ENCODE measurements at regions of chr17 and their contacts with region 1.

Region 1: GRCh38 chr17:16537130-16537458 is 31.9 kb downstream of the ZNF287 start:
- DNase-seq: no peak
- ATAC-seq: no peak
- H3K4me3 ChIP-seq: no peak overlapping the region
- H3K27ac ChIP-seq: no peak overlapping the region
- H3K4me1 ChIP-seq: no peaks in the 10 kb centered on the region
- H3K27me3 ChIP-seq: no peaks in the 10 kb centered on the region
- CTCF ChIP-seq: no peak
- POLR2A ChIP-seq: no peak
- RAD21 ChIP-seq: no peak

Region 2: DNA sequence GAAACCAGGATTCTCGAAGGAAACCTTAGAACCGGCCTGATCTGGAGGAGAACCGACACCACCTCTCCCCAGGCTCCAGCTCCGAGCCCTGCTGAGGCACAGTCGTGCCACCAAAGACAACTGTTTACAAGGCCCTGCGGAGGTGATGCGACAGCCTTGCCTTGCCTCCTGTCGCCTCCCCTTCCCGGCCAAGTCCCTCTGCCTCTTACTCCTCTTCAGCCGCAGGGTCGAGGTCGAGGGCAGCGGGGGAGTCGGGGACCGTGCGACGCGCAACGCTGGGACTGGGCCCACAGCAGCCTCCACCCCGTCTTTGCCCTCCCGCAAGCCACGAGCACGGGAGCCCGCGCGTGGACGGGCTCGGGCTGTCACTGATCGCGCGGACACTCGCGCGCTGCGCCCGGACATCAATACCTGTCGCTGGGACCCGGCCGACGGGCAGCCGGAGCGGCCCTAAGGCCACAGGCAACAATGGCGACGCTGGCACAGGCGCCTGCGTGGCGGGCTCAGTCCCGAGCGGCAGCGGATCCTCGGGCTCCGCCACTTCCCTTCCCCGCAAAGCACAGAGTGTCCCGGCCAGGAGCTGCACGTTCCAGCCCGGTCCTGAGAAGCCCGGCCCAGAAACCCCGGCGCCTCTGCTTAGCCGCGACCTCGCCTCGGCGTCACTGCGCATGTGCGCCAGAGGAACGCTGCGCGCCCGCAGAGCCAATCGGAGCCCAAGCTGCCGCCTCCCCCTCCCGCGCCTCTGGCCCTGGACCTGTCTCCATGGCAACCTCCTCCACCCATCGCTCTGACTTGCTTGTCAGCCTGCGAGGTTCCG is 31.7 kb after region 1 on chr17 and contains the start of gene ZNF287:
- CTCF ChIA-PET with region 1: no interaction called
- POLR2A ChIA-PET with region 1: no interaction called
- dilution Hi-C with region 1: no loop called
- in situ Hi-C with region 1: no loop called
- intact Hi-C with region 1: loop called (anchors 1 kb)
- DNase-seq: peak; percentile 86
- ATAC-seq: peak; percentile 100
- H3K4me3 ChIP-seq: peak within 1 kb of the TSS; percentile 69
- H3K27ac ChIP-seq: peak within 1 kb of the TSS; percentile 33; the same call in 1 of the 2 replicates
- H3K4me1 ChIP-seq: no peaks in the 10 kb centered on the region
- H3K27me3 ChIP-seq: peaks cover 5% of the 10 kb centered on the region; the same call in 1 of the 2 replicates
- CTCF ChIP-seq: no peak
- POLR2A ChIP-seq: no peak
- RAD21 ChIP-seq: no peak
- total RNA-seq, gene ZNF287: 6.9 and 7.0 TPM in 2 replicates